Endothelial cell of umbilical vein (primary cell): ENCODE measurements at regions of chr6 and their contacts with region 1.

Region 1: GRCh38 chr6:70566751-70567382 is at the start of gene SDHAF4:
- DNase-seq: peak; percentile 90
- H3K4me3 ChIP-seq: peak within 1 kb of the TSS; percentile 90 to 94 (median 92)
- H3K27ac ChIP-seq: peak within 1 kb of the TSS; percentile 73
- H3K4me1 ChIP-seq: peaks cover 6% of the 10 kb centered on the region
- H3K27me3 ChIP-seq: no peaks in the 10 kb centered on the region
- CTCF ChIP-seq: peak in 1 of 2 donors; percentile 2
- POLR2A ChIP-seq: peak; percentile 93
- total RNA-seq, gene SDHAF4: 8.6 and 10.8 TPM in 2 replicates

Region 2: DNA sequence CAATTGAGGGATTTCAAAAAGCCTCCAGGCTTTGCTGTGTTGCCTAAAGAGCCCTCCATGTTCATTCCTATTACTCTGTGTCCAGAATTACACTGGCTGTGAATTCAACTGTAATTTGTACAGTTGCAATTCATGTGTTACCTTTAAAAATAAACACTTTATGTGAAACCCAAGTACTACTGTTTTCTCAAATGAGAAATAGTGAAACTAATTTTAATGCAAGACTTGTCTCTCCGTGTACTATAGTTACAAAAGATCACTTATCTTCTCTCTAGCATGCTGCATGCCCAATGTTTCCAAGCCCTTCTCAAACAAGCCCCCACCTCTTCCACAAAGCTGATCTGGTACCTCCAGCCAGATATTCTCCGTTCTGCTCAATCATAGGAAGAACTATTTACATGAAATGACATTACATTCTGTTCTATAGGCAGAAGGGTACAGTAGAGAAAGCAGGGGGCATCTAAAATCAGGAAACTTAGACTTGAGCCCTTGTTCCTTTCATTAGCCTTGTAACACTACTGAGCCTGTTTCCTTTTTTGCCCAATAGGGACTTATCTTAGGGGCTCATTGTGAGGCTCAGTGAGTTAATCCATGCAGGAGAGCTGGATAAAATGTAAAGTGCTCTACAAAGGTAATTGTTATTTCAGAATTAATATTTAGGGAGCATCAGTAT is 251.7 kb before region 1 on chr6:
- CTCF ChIA-PET with region 1: no interaction called
- POLR2A ChIA-PET with region 1: no interaction called
- dilution Hi-C with region 1: no loop called
- intact Hi-C with region 1: no loop called
- DNase-seq: no peak
- H3K4me3 ChIP-seq: no peak overlapping the region
- H3K27ac ChIP-seq: no peak overlapping the region
- H3K4me1 ChIP-seq: no peaks in the 10 kb centered on the region
- H3K27me3 ChIP-seq: peaks cover 0 to 6% of the 10 kb centered on the region in 2 experiments
- CTCF ChIP-seq: no peak
- POLR2A ChIP-seq: no peak

Region 3: DNA sequence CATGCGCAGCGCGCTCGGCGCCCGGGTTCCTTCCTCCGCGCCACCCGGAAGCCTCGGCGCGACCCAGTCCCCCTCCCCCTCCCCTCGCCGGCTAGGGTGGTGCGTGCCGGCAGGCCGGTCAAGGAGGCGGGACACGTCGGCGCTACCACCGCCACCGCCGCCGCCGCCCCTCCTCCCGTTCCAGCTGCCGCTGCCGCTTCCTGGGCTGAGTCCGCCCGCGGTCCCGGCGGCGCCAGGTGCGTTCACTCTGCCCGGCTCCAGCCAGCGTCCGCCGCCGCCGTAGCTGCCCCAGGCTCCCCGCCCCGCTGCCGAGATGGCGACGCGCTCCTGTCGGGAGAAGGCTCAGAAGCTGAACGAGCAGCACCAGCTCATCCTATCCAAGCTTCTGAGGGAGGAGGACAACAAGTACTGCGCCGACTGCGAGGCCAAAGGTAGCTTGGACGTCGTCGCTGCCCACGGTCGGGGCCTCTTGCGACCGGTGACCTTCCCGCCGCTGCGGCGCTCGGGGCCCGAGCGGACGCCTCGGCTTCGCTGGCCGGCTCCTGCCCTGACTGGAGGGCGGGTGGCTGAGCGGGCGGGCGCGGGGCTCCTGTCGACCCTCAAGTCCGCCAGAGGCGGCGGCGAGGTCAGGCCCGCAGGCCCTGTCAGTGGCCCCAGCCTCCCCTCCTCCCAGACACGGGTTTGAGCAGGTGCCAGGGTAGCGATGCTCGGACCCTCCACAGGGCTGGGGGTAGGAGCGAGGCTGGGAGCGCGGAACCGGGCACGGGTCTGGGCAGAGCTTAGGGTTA is 101.0 kb after region 1 on chr6 and contains the start of gene SMAP1:
- CTCF ChIA-PET with region 1: no interaction called
- POLR2A ChIA-PET with region 1: interaction called, 5 read pairs
- dilution Hi-C with region 1: no loop called
- intact Hi-C with region 1: loop called (anchors 2 kb)
- DNase-seq: peak; percentile 91
- H3K4me3 ChIP-seq: peak within 1 kb of the TSS; percentile 77 to 93 (median 89)
- H3K27ac ChIP-seq: peak within 1 kb of the TSS; percentile 75
- H3K4me1 ChIP-seq: peaks cover 16% of the 10 kb centered on the region
- H3K27me3 ChIP-seq: no peaks in the 10 kb centered on the region
- CTCF ChIP-seq: peak in 1 of 2 donors; percentile 1
- POLR2A ChIP-seq: peak; percentile 19
- total RNA-seq, gene SMAP1: 24.6 and 24.7 TPM in 2 replicates